ENCODE measurements at regions of chr9 and their contacts with region 1.

Region 1: GRCh38 chr9:121213136-121213806 is 11.6 kb upstream of the RAB14 start:
- DNase-seq: peak; percentile 86 to 88
- ATAC-seq: peak; percentile 94 to 99
- H3K4me3 ChIP-seq: no peak overlapping the region
- H3K27ac ChIP-seq: peak overlapping the region; percentile 12 to 74
- H3K4me1 ChIP-seq: no peaks in the 10 kb centered on the region
- CTCF ChIP-seq: peak; percentile 95
- EP300 ChIP-seq: no peak
- POLR2A ChIP-seq: no peak
- RAD21 ChIP-seq: peak; percentile 97

Region 2: GRCh38 chr9:121233906-121234901 is 20.9 kb after region 1 on chr9:
- CTCF ChIA-PET with region 1: interaction called, 74 read pairs
- POLR2A ChIA-PET with region 1: no interaction called
- DNase-seq: no peak
- ATAC-seq: no peak
- H3K4me3 ChIP-seq: no peak overlapping the region
- H3K27ac ChIP-seq: no peak overlapping the region
- H3K4me1 ChIP-seq: 0 out of 3 replicates have a peak, but pooled peaks cover 5% of the 10 kb centered on the region
- CTCF ChIP-seq: no peak
- EP300 ChIP-seq: no peak
- POLR2A ChIP-seq: no peak
- RAD21 ChIP-seq: no peak

Region 3: DNA sequence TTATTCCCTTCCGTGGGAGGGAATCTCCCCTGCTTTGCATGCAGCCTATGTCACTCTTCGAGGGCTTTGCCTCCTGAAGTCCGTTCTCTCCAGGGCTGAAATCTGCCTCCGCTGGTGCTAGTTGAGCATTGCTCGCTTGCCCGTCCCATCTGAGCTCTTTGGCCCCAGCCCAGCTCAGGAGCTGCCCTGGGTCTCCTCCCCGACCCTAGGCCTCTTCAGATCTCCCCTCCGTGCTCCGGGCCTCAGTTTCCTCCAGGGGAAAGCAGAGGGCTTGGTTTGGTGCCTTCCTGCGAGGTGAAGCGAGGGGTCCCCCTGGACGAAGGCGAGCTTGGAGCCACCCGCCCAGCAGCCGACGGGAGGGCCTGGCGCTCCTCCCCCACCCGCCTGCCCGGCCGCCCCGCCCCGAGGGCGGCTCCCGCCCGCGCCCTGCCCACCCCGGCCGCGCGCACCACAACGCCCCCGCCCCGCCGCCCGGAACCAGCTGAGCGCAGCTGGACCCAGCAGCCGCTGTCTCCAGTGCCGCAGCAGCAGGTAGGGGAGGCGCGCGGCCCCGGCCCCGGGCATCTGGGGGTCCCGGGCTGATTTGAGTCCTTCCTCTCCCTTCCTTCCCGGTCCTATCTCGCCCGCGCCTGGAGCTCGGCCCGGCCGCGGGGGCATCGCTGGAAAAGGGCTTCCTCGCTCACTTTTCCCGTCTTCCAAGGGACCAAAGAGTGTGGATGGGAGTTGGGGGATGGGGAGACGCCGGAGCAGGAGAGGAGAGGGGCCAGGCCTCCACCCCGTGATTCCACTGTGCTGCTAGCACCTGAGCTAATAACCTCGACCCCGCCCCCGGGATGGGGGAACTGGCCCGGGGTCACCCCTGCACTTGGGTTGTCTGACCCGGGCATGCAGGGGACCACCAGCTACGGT is 54.7 kb after region 1 on chr9 and contains the start of gene GSN:
- CTCF ChIA-PET with region 1: interaction called, 27 read pairs
- POLR2A ChIA-PET with region 1: interaction called, 3 read pairs
- DNase-seq: peak; percentile 62 to 69
- ATAC-seq: peak; percentile 89 to 92
- H3K4me3 ChIP-seq: peak within 1 kb of the TSS; percentile 95
- H3K27ac ChIP-seq: peak within 1 kb of the TSS; percentile 80 to 92
- H3K4me1 ChIP-seq: peaks cover 28% of the 10 kb centered on the region
- CTCF ChIP-seq: no peak
- EP300 ChIP-seq: no peak
- POLR2A ChIP-seq: peak; percentile 91
- RAD21 ChIP-seq: no peak; a peak in 1 of 5 replicates
- polyA plus RNA-seq, gene GSN: 77.2 and 88.5 TPM in 2 replicates

Region 4: GRCh38 chr9:121305269-121305994 is 92.2 kb after region 1 on chr9:
- CTCF ChIA-PET with region 1: interaction called, 11 read pairs
- POLR2A ChIA-PET with region 1: no interaction called
- DNase-seq: no peak
- ATAC-seq: no peak
- H3K4me3 ChIP-seq: no peak overlapping the region
- H3K27ac ChIP-seq: peak overlapping the region in 1 of 2 experiments; percentile 30; a peak in 2 of 6 replicates
- H3K4me1 ChIP-seq: peaks cover 20% of the 10 kb centered on the region
- CTCF ChIP-seq: no peak
- EP300 ChIP-seq: no peak
- POLR2A ChIP-seq: no peak
- RAD21 ChIP-seq: no peak

Region 5: GRCh38 chr9:121383715-121384114 is 170.4 kb after region 1 on chr9:
- CTCF ChIA-PET with region 1: interaction called, 10 read pairs
- POLR2A ChIA-PET with region 1: no interaction called
- DNase-seq: no peak
- ATAC-seq: no peak
- H3K4me3 ChIP-seq: no peak overlapping the region
- H3K27ac ChIP-seq: no peak overlapping the region
- H3K4me1 ChIP-seq: no peaks in the 10 kb centered on the region
- CTCF ChIP-seq: no peak
- EP300 ChIP-seq: no peak
- POLR2A ChIP-seq: no peak
- RAD21 ChIP-seq: no peak

Region 6: GRCh38 chr9:121439711-121440664 is 226.7 kb after region 1 on chr9:
- CTCF ChIA-PET with region 1: interaction called, 27 read pairs
- POLR2A ChIA-PET with region 1: no interaction called
- DNase-seq: peak; percentile 49 to 70
- ATAC-seq: peak; percentile 92 to 97
- H3K4me3 ChIP-seq: no peak overlapping the region
- H3K27ac ChIP-seq: no peak overlapping the region
- H3K4me1 ChIP-seq: no peaks in the 10 kb centered on the region
- CTCF ChIP-seq: peak; percentile 40
- EP300 ChIP-seq: no peak
- POLR2A ChIP-seq: no peak
- RAD21 ChIP-seq: peak; percentile 33 to 41; a peak in 2 of 5 replicates

Region 7: GRCh38 chr9:121463026-121463807 is 249.9 kb after region 1 on chr9:
- CTCF ChIA-PET with region 1: no interaction called
- POLR2A ChIA-PET with region 1: no interaction called
- DNase-seq: peak; percentile 24 to 30
- ATAC-seq: peak; percentile 40 to 72; a peak in 4 of 6 replicates
- H3K4me3 ChIP-seq: no peak overlapping the region
- H3K27ac ChIP-seq: no peak overlapping the region
- H3K4me1 ChIP-seq: no peaks in the 10 kb centered on the region
- CTCF ChIP-seq: peak; percentile 39
- EP300 ChIP-seq: no peak
- POLR2A ChIP-seq: no peak
- RAD21 ChIP-seq: no peak